Esophagus muscularis mucosa (tissue), 4 donors: ENCODE measurements at regions of chr16 and their contacts with region 1.

Region 1: DNA sequence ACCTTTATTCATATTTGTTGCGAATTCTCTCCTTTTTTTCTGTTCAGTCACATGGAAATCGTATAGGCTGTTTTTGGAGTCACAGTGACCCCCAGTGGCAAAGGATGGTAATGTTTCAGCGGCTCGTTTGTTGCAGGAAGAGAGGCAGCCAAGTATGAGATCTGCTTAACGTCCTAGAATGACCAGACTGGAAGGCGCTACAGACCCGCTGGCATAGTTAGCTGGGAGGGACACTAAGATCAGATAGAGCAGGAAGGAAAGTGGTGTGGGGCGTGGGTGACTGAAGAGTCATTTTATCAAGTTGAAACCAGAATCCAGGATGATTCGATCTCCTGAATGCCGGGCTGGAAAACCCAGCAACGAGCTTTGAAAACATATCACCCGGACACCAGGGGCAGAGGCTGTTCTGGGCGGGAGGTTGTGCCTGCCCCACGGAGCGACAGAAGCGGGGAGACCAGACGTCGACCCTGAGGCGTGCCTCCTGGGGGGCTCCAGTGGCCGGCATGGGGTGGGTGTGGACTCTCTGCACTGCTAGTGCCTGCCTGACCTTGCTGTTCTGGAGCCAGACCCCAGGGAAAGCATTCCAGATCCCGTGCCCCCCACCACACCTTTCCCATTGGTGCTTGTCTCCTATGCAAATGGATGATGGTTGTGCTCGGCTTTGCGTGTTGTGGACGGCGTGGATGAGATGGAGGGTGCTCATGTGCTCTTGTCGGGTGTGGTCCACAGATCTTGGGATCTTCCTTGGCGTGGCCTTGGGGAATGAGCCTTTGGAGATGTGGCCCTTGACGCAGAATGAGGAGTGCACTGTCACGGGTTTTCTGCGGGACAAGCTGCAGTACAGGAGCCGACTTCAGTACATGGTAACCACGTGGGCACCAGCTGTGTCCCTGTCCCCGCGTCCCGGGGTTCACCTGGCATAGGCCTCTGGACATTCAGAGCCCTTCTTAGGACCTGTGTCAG is 7.7 kb downstream of the IL34 start:
- DNase-seq: peak; percentile 99
- H3K4me3 ChIP-seq: peak overlapping the region; percentile 29 to 46 (median 32)
- H3K27ac ChIP-seq: peak overlapping the region; percentile 21 to 65 (median 34)
- H3K4me1 ChIP-seq: peaks cover 5 to 11% (median 8%) of the 10 kb centered on the region in 4 donors
- H3K27me3 ChIP-seq: no peaks in the 10 kb centered on the region
- CTCF ChIP-seq: peak; percentile 89 to 98 (median 92)
- EP300 ChIP-seq: no peak
- POLR2A ChIP-seq: no peak

Region 2: GRCh38 chr16:70372921-70373728 is 281.0 kb before region 1 on chr16:
- intact Hi-C with region 1: loop called (anchors 5 kb)
- DNase-seq: no peak
- H3K4me3 ChIP-seq: no peak overlapping the region
- H3K27ac ChIP-seq: no peak overlapping the region
- H3K4me1 ChIP-seq: peaks cover 0 to 16% (median 3%) of the 10 kb centered on the region in 4 donors
- H3K27me3 ChIP-seq: no peaks in the 10 kb centered on the region
- CTCF ChIP-seq: no peak
- EP300 ChIP-seq: no peak
- POLR2A ChIP-seq: no peak

Region 3: DNA sequence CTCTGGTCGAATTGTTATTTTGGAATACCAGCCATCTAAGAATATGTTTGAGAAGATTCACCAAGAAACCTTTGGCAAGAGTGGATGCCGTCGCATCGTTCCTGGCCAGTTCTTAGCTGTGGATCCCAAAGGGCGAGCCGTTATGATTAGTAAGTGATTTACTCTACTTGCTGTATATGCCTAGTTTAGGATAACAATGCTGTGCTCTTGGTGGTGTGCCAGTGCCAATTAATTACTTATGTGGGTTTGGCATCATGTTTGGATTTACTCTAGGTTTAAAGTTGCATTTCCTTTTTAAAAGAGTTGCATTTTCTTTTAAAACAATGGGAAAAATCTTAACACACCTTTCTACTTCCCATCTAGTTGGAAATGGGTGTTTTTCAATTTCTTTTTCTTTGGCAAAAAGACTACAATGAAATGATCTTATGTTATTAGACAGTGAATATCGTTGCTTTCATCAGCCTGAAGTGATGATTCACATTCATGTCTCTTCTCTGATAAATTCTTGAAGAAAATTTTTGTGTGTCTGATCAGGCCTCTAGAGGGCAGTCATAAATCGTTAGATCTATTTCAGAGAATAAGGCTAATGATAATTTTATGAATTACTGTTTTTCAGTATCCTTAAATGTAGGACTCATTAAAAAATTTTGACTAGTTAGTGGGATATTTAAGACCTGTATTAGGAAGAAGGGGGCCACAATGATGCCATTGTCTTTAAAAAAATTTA is 124.9 kb before region 1 on chr16:
- intact Hi-C with region 1: loop called (anchors 5 kb)
- DNase-seq: no peak
- H3K4me3 ChIP-seq: no peak overlapping the region
- H3K27ac ChIP-seq: peak overlapping the region in 1 of 4 donors; percentile 15
- H3K4me1 ChIP-seq: peaks cover 34 to 60% (median 54%) of the 10 kb centered on the region in 4 donors
- H3K27me3 ChIP-seq: no peaks in the 10 kb centered on the region
- CTCF ChIP-seq: peak; percentile 45 to 58 (median 50)
- EP300 ChIP-seq: no peak
- POLR2A ChIP-seq: no peak

Region 4: GRCh38 chr16:70576431-70577255 is 77.4 kb before region 1 on chr16:
- intact Hi-C with region 1: loop called (anchors 5 kb)
- DNase-seq: no peak
- H3K4me3 ChIP-seq: no peak overlapping the region
- H3K27ac ChIP-seq: peak overlapping the region; percentile 27 to 52 (median 34)
- H3K4me1 ChIP-seq: peaks cover 53 to 67% (median 62%) of the 10 kb centered on the region in 4 donors
- H3K27me3 ChIP-seq: no peaks in the 10 kb centered on the region
- CTCF ChIP-seq: no peak
- EP300 ChIP-seq: no peak
- POLR2A ChIP-seq: no peak